ENCODE measurements at regions of chr5 and their contacts with region 1.

Region 1: DNA sequence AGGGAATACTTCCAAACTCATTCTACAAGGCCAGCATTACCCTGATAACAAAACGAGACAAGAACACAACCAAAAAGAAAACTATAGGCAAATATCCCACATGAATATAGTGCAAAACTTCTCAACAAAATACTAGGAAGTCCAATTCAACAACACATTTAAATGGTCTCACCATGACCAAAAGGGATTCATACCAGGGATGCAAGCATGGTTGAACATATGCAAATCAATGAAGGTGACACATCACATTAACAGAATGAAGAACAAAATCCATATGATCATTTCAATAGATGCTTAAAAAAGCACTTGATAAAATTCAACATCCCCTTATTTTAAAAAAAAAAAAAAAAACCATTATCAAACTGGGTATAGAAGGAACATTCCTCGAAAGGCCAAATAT is 186.0 kb downstream of the DTWD2 start:
- DNase-seq: no peak
- ATAC-seq: no peak
- H3K4me3 ChIP-seq: no peak overlapping the region
- H3K27ac ChIP-seq: no peak overlapping the region
- H3K4me1 ChIP-seq: no peaks in the 10 kb centered on the region
- H3K27me3 ChIP-seq: no peaks in the 10 kb centered on the region
- CTCF ChIP-seq: no peak
- POLR2A ChIP-seq: no peak
- RAD21 ChIP-seq: no peak

Region 2: DNA sequence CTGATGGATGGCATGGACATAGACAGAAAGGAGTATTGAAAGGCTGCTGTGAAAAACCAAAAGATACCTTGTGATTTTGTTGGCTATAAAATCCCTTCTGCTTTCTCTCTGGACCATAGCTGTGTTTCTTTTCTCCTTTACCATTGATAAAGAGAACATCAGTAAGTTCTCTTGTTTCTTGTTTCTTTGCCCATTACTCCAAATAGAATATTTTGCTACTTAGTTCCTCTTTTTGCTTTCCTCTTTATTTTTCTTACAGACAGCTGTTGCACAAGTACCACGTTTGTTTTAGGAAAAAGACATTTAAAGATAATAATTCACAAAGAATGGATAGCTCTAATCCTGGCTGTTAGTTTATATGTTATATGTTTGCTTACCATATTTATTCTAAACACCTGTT is 943.2 kb before region 1 on chr5:
- CTCF ChIA-PET with region 1: no interaction called
- POLR2A ChIA-PET with region 1: no interaction called
- dilution Hi-C with region 1: no loop called
- in situ Hi-C with region 1: no loop called
- intact Hi-C with region 1: no loop called
- DNase-seq: no peak
- ATAC-seq: no peak
- H3K4me3 ChIP-seq: no peak overlapping the region
- H3K27ac ChIP-seq: no peak overlapping the region
- H3K4me1 ChIP-seq: no peaks in the 10 kb centered on the region
- H3K27me3 ChIP-seq: no peaks in the 10 kb centered on the region
- CTCF ChIP-seq: no peak
- POLR2A ChIP-seq: no peak
- RAD21 ChIP-seq: no peak

Region 3: GRCh38 chr5:118580949-118581348 is 221.4 kb before region 1 on chr5:
- CTCF ChIA-PET with region 1: no interaction called
- POLR2A ChIA-PET with region 1: no interaction called
- dilution Hi-C with region 1: no loop called
- in situ Hi-C with region 1: no loop called
- intact Hi-C with region 1: no loop called
- DNase-seq: no peak
- ATAC-seq: no peak
- H3K4me3 ChIP-seq: no peak overlapping the region
- H3K27ac ChIP-seq: no peak overlapping the region
- H3K4me1 ChIP-seq: no peaks in the 10 kb centered on the region
- H3K27me3 ChIP-seq: no peaks in the 10 kb centered on the region
- CTCF ChIP-seq: no peak
- POLR2A ChIP-seq: no peak
- RAD21 ChIP-seq: no peak

Region 4: GRCh38 chr5:118692811-118693342 is 109.5 kb before region 1 on chr5:
- CTCF ChIA-PET with region 1: no interaction called
- POLR2A ChIA-PET with region 1: no interaction called
- dilution Hi-C with region 1: no loop called
- in situ Hi-C with region 1: no loop called
- intact Hi-C with region 1: no loop called
- DNase-seq: no peak
- ATAC-seq: no peak
- H3K4me3 ChIP-seq: no peak overlapping the region
- H3K27ac ChIP-seq: no peak overlapping the region
- H3K4me1 ChIP-seq: no peaks in the 10 kb centered on the region
- H3K27me3 ChIP-seq: no peaks in the 10 kb centered on the region
- CTCF ChIP-seq: no peak
- POLR2A ChIP-seq: no peak
- RAD21 ChIP-seq: no peak

Region 5: GRCh38 chr5:118832974-118833373 is 30.6 kb after region 1 on chr5:
- CTCF ChIA-PET with region 1: no interaction called
- POLR2A ChIA-PET with region 1: no interaction called
- dilution Hi-C with region 1: no loop called
- in situ Hi-C with region 1: no loop called
- intact Hi-C with region 1: no loop called
- DNase-seq: no peak
- ATAC-seq: no peak
- H3K4me3 ChIP-seq: no peak overlapping the region
- H3K27ac ChIP-seq: no peak overlapping the region
- H3K4me1 ChIP-seq: no peaks in the 10 kb centered on the region
- H3K27me3 ChIP-seq: no peaks in the 10 kb centered on the region
- CTCF ChIP-seq: no peak
- POLR2A ChIP-seq: no peak
- RAD21 ChIP-seq: no peak

Region 6: GRCh38 chr5:118844351-118844750 is 42.0 kb after region 1 on chr5:
- CTCF ChIA-PET with region 1: interaction called, 10 read pairs
- POLR2A ChIA-PET with region 1: no interaction called
- dilution Hi-C with region 1: no loop called
- in situ Hi-C with region 1: no loop called
- intact Hi-C with region 1: no loop called
- DNase-seq: no peak
- ATAC-seq: no peak
- H3K4me3 ChIP-seq: no peak overlapping the region
- H3K27ac ChIP-seq: no peak overlapping the region
- H3K4me1 ChIP-seq: no peaks in the 10 kb centered on the region
- H3K27me3 ChIP-seq: no peaks in the 10 kb centered on the region
- CTCF ChIP-seq: no peak
- POLR2A ChIP-seq: no peak
- RAD21 ChIP-seq: no peak